H1 (cell line): ENCODE measurements at regions of chr9 and their contacts with region 1.

Region 1: DNA sequence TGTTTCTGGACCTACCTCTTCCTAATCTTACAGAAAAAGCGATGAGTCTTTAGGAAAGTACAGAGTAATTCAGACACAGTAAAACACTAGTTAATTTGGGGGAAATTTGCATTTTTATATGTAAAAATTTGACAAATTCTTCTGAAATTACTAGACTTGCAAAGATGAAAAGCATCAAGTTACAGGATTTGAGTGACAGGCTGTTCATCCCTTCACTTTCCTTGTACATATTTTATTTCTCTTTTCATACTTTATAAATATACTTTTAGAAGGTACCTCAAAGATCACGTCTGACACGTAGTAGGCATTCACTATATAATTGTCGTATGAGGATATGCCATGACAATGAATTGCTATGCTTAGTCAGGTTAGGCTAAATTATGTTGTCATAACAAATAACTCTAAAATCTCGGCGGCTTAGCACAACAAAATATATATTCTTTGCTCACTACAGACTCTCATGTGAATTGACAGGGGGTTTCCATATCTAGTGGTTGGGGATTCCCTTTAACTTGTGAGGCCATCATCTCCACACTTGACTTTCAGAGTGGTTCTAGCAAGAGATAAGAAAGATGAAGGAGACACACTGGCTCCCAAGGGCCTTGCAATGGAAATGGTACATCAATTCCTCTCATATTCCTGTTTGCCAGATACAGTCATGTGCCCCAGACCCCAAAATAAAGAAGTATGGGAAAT is 154.1 kb upstream of the TUT7 start:
- DNase-seq: no peak
- H3K4me3 ChIP-seq: no peak overlapping the region
- H3K27ac ChIP-seq: no peak overlapping the region
- H3K4me1 ChIP-seq: no peaks in the 10 kb centered on the region; a peak in 1 of 7 replicates
- H3K27me3 ChIP-seq: no peaks in the 10 kb centered on the region
- CTCF ChIP-seq: no peak
- EP300 ChIP-seq: no peak
- POLR2A ChIP-seq: no peak
- RAD21 ChIP-seq: no peak

Region 2: GRCh38 chr9:86413966-86414880 is 94.1 kb before region 1 on chr9:
- CTCF ChIA-PET with region 1: no interaction called
- POLR2A ChIA-PET with region 1: no interaction called
- DNase-seq: no peak
- H3K4me3 ChIP-seq: no peak overlapping the region
- H3K27ac ChIP-seq: no peak overlapping the region
- H3K4me1 ChIP-seq: no peaks in the 10 kb centered on the region
- H3K27me3 ChIP-seq: peaks cover 18 to 36% (median 32%) of the 10 kb centered on the region in 4 experiments
- CTCF ChIP-seq: peak in 2 of 3 experiments; percentile 33 to 36; a peak in 2 of 4 replicates
- EP300 ChIP-seq: no peak
- POLR2A ChIP-seq: no peak
- RAD21 ChIP-seq: peak; percentile 61 to 64

Region 3: GRCh38 chr9:86486891-86487837 is 21.2 kb before region 1 on chr9:
- CTCF ChIA-PET with region 1: interaction called, 12 read pairs
- POLR2A ChIA-PET with region 1: no interaction called
- DNase-seq: no peak
- H3K4me3 ChIP-seq: no peak overlapping the region
- H3K27ac ChIP-seq: no peak overlapping the region
- H3K4me1 ChIP-seq: no peaks in the 10 kb centered on the region
- H3K27me3 ChIP-seq: no peaks in the 10 kb centered on the region
- CTCF ChIP-seq: peak in 2 of 3 experiments; percentile 49 to 58; a peak in 2 of 4 replicates
- EP300 ChIP-seq: no peak
- POLR2A ChIP-seq: no peak
- RAD21 ChIP-seq: peak; percentile 86 to 88

Region 4: GRCh38 chr9:86521977-86522376 is 13.6 kb after region 1 on chr9:
- CTCF ChIA-PET with region 1: no interaction called
- POLR2A ChIA-PET with region 1: no interaction called
- DNase-seq: no peak
- H3K4me3 ChIP-seq: no peak overlapping the region
- H3K27ac ChIP-seq: no peak overlapping the region
- H3K4me1 ChIP-seq: no peaks in the 10 kb centered on the region
- H3K27me3 ChIP-seq: no peaks in the 10 kb centered on the region
- CTCF ChIP-seq: no peak
- EP300 ChIP-seq: no peak
- POLR2A ChIP-seq: no peak
- RAD21 ChIP-seq: no peak